A549 (cell line): ENCODE measurements at regions of chr16 and their contacts with region 1.

Region 1: GRCh38 chr16:30557957-30558788 is at the start of gene ZNF764:
- DNase-seq: peak; percentile 96 to 99
- ATAC-seq: peak; percentile 96 to 97
- H3K4me3 ChIP-seq: peak within 1 kb of the TSS; percentile 82
- H3K27ac ChIP-seq: peak within 1 kb of the TSS; percentile 93 to 98
- H3K4me1 ChIP-seq: peaks cover 4% of the 10 kb centered on the region; the same call in 1 of the 3 replicates
- CTCF ChIP-seq: no peak
- EP300 ChIP-seq: no peak
- POLR2A ChIP-seq: peak; percentile 55
- RAD21 ChIP-seq: peak in 1 of 2 experiments; percentile 19; a peak in 1 of 5 replicates
- polyA plus RNA-seq, gene ZNF764: 2.9 and 3.0 TPM in 2 replicates

Region 2: DNA sequence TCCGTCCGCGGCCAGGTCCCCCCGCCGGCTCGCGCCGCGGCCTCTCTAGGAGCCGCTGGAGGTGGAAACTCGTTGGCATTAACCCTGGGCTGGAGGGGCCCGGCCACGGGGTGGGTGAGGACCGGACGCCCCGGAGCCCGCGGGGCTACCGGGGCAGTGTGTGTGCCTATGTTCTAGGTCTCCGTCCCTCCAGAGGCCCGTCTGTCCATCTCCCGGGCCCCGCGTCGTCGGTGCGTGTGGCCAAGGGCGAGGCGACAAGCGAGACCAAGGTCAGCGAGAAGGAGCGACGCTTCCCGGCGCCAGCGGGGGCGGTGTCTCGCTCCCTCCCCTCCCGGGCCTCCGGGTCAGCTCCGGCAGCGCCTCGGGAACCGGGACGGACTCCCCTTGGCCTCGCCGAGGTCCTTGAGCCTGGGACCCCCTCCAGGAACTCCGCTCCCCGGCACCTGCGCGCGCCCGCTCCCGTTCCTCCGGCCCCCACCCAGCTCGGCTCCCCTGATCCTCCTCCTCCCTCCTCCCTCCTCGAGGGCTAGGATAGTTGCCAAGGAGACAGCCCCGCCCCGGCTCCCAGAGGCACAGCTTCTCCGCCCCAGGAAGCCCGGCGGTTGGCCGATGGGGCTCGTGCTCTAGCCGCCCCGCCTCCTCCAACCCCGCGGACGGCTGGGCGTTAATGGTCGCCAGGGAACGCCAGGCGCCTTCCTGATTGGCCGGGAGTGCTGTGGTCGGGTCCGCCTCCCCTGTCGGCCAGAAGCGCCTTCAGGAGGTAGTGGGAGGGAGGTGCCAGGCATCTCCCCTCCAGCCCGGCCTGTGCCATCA is 31.1 kb before region 1 on chr16:
- CTCF ChIA-PET with region 1: interaction called, 4 read pairs
- POLR2A ChIA-PET with region 1: interaction called, 17 read pairs
- DNase-seq: peak; percentile 97
- ATAC-seq: peak; percentile 91 to 95
- H3K4me3 ChIP-seq: peak overlapping the region; percentile 85
- H3K27ac ChIP-seq: peak overlapping the region; percentile 96 to 98
- H3K4me1 ChIP-seq: peaks cover 24% of the 10 kb centered on the region
- CTCF ChIP-seq: peak; percentile 14; the same call in 1 of the 3 replicates
- EP300 ChIP-seq: no peak
- POLR2A ChIP-seq: peak; percentile 12
- RAD21 ChIP-seq: peak in 1 of 2 experiments; percentile 25; a peak in 1 of 5 replicates

Region 3: GRCh38 chr16:30541502-30542329 is 16.5 kb before region 1 on chr16:
- CTCF ChIA-PET with region 1: interaction called, 10 read pairs
- POLR2A ChIA-PET with region 1: interaction called, 36 read pairs
- DNase-seq: no peak
- ATAC-seq: peak; percentile 40 to 41; a peak in 3 of 6 replicates
- H3K4me3 ChIP-seq: no peak overlapping the region
- H3K27ac ChIP-seq: no peak overlapping the region
- H3K4me1 ChIP-seq: peaks cover 10% of the 10 kb centered on the region; the same call in 1 of the 3 replicates
- CTCF ChIP-seq: no peak
- EP300 ChIP-seq: no peak
- POLR2A ChIP-seq: no peak
- RAD21 ChIP-seq: no peak

Region 4: GRCh38 chr16:30602616-30603277 is 44.6 kb after region 1 on chr16:
- CTCF ChIA-PET with region 1: interaction called, 10 read pairs
- POLR2A ChIA-PET with region 1: interaction called, 5 read pairs
- DNase-seq: no peak
- ATAC-seq: no peak; a peak in 1 of 6 replicates
- H3K4me3 ChIP-seq: no peak overlapping the region
- H3K27ac ChIP-seq: no peak overlapping the region
- H3K4me1 ChIP-seq: no peaks in the 10 kb centered on the region
- CTCF ChIP-seq: no peak
- EP300 ChIP-seq: no peak
- POLR2A ChIP-seq: no peak
- RAD21 ChIP-seq: no peak

Region 5: DNA sequence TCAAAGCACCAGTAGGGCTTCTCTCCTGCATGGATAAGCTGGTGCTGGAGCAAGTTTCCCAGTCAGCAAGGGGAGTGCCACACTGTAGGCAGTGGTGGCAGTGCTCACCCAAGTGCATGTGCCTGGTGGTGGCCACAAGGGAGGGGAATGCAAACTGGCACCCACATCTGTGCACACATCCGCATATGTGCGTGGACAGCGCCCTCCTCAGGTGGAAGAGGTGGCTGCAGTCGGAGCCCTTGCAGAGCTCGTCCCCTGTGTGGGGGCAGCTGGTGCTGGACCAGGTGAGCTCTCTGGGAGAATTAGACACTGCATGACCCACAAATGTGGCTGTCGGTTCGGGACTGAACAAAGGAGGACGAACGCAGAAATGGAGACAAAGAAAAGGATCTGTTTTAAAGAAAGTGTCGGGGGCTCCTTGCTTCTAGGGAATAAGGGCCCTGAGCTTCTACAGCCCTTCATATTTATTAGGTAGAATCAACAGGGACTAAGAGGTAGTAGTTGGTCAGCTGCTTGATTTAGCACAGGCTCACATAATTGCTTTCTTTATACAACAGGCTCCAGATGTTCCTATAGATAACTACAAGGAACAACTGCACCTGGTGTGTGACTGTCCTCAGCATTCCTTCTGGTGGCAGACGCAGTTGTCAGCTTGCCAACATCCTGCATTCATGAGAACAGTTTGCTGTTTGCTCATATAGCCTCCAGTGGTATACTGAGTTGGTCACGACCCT is 57.4 kb after region 1 on chr16:
- CTCF ChIA-PET with region 1: interaction called, 10 read pairs
- POLR2A ChIA-PET with region 1: interaction called, 10 read pairs
- DNase-seq: peak; percentile 80 to 84
- ATAC-seq: peak; percentile 92 to 94
- H3K4me3 ChIP-seq: no peak overlapping the region
- H3K27ac ChIP-seq: no peak overlapping the region
- H3K4me1 ChIP-seq: peaks cover 16% of the 10 kb centered on the region; the same call in 2 of the 3 replicates
- CTCF ChIP-seq: peak; percentile 73
- EP300 ChIP-seq: no peak
- POLR2A ChIP-seq: no peak
- RAD21 ChIP-seq: peak; percentile 80 to 90